Dorsolateral prefrontal cortex (tissue), 120 donors: ENCODE measurements at regions of chr12 and their contacts with region 1.

Region 1: DNA sequence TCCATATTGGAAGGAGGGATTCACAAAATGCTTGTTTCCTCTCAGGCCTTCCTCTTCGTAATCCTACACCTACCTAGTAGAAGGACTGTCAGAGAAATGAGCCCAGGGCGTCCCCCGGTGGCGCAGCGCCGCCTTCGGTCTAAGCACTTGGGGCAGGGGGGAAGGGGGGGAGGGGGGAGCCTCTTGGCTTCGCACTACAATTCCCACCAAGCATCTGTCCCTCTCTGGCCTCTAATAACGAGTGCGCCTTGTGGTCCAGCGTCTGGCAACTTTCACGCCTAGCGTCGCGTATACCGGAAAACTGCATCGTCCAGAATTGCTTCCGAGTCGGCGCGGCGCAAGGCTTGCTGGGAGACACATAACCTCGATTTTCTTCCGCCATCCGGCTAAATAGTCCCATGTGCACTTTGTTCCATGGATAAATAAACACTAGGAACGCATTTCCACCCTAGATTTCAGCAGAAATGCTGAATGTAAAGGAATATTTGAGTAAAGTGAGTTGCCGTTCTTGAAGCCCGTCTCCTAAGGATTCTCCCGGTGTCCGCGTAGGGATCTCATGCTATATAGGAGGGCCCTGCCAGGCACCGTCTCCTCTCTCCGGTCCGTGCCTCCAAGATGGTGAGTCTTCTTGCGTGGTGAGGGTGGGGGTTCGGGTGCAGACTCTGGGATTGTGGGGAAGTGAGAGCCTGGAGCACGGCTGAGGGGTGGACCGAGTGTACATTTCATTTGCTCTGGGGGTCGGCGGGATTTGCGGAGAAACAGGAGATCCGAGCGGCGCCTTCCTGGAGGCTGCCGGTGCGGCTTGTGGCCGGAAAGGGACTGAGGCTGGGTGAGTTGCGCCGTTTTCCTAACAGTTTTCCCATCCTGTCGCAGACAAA is at the start of gene RPS26:
- DNase-seq: peak; percentile 81 to 96 (median 92)
- H3K4me3 ChIP-seq: peak within 1 kb of the TSS; percentile 56 to 99 (median 87)
- H3K27ac ChIP-seq: peak within 1 kb of the TSS; percentile 68 to 100 (median 97)
- H3K27me3 ChIP-seq: no peaks in the 10 kb centered on the region
- CTCF ChIP-seq: peak in 55 of 56 donors; percentile 32 to 74 (median 57)
- total RNA-seq, gene RPS26: 6.6 to 65.3 (median 18.5) TPM

Region 2: DNA sequence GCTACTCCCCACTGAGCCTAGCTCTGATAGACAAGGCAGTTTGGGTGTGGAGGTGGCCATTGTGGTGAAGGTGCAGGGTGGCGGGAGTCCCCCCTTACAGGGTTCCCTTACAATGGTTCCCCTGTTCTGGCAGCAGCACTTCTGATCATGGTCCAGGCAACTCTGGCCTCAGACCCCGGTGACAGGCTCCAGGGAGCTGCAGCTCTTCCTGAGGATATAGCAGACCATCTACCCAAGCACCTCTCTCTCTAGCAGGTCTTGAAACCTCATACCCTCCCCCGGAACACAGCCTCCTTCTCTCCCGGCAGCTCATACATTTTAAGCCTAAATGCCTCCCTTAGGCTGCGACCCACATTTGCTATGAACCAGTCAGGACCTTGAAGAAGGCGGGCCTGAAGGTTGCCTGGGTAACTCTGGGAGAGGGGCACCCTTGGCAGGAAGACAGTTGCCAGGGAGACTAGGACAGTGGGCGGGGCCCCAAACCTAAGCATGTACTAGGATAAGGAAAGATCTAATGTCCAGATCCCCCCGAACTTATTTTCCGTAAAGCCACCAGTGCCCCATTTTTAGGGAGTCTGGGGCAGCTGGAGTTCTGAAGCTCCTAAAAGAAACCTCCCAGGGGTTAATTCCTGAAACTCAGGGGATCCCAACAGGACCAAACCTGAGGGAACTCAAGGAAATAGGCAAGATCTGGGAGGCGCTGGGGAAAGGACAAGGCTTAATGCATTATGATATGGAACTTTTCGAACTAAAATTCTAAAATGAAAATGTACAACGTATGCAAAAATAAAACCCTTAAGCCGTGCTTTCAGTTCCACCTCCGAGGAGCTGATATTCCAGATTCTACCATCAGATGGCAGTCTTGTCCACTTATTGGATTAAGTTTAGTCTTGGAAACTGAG is 303.4 kb before region 1 on chr12:
- intact Hi-C with region 1: loop called in 1 of 2 experiments (anchors 2 kb)
- DNase-seq: peak; percentile 48 to 88 (median 80)
- H3K4me3 ChIP-seq: peak overlapping the region; percentile 32 to 78 (median 63)
- H3K27ac ChIP-seq: peak overlapping the region; percentile 25 to 96 (median 87)
- H3K27me3 ChIP-seq: no peaks in the 10 kb centered on the region
- CTCF ChIP-seq: peak; percentile 79 to 98 (median 94)

Region 3: GRCh38 chr12:55996715-55997534 is 44.9 kb before region 1 on chr12 and contains the start of gene SUOX:
- intact Hi-C with region 1: loop called (anchors 2 to 5 kb)
- DNase-seq: peak; percentile 90 to 99 (median 98)
- H3K4me3 ChIP-seq: peak within 1 kb of the TSS; percentile 57 to 96 (median 79)
- H3K27ac ChIP-seq: peak within 1 kb of the TSS; percentile 25 to 96 (median 89)
- H3K27me3 ChIP-seq: no peaks in the 10 kb centered on the region
- CTCF ChIP-seq: peak in 24 of 56 donors; percentile 15 to 52 (median 30)
- total RNA-seq, gene SUOX: 19.5 to 39.8 (median 28.4) TPM

Region 4: DNA sequence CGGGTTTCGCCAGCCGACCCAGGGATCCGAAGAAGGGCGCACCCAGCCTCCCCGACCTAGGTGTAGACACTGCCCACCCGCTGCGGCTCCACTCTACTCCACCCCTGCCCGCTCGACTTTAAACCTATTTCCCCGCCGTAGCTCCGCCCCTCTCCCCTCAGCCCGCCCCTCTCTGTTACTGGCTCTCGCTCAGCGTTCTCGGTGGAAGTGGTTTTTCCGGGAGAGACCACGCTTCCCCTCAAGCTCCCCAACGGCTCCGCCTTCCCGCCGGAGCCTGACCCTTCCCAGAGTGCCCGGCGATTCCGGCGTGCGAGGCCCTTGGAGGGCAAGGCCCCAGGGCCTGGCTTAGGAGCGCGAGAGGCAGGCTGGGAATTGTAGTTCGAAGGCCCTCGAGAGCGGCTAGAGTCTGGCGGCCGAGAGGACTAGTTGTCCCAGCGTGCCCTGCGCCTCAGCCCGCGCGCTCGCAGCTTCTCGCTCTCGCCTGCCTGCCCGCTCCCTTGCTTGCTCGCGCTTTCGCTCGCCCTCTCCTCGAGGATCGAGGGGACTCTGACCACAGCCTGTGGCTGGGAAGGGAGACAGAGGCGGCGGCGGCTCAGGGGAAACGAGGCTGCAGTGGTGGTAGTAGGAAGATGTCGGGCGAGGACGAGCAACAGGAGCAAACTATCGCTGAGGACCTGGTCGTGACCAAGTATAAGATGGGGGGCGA is 62.5 kb after region 1 on chr12 and contains the start of gene PA2G4:
- intact Hi-C with region 1: loop called in 1 of 2 experiments (anchors 2 kb)
- DNase-seq: peak; percentile 94 to 99 (median 97)
- H3K4me3 ChIP-seq: peak within 1 kb of the TSS; percentile 67 to 98 (median 91)
- H3K27ac ChIP-seq: peak within 1 kb of the TSS; percentile 39 to 96 (median 85)
- H3K27me3 ChIP-seq: no peaks in the 10 kb centered on the region
- CTCF ChIP-seq: peak in 39 of 56 donors; percentile 13 to 68 (median 34)
- total RNA-seq, gene PA2G4: 40.1 to 80.6 (median 58.7) TPM

Region 5: GRCh38 chr12:56189176-56189917 is 147.6 kb after region 1 on chr12 and contains the start of gene SMARCC2:
- intact Hi-C with region 1: loop called in 1 of 2 experiments (anchors 10 kb)
- DNase-seq: peak; percentile 56 to 88 (median 75)
- H3K4me3 ChIP-seq: peak within 1 kb of the TSS; percentile 68 to 93 (median 82)
- H3K27ac ChIP-seq: peak within 1 kb of the TSS; percentile 49 to 95 (median 88)
- H3K27me3 ChIP-seq: no peaks in the 10 kb centered on the region
- CTCF ChIP-seq: peak; percentile 35 to 83 (median 66)
- total RNA-seq, gene SMARCC2: 144 to 252 (median 196) TPM

Region 6: DNA sequence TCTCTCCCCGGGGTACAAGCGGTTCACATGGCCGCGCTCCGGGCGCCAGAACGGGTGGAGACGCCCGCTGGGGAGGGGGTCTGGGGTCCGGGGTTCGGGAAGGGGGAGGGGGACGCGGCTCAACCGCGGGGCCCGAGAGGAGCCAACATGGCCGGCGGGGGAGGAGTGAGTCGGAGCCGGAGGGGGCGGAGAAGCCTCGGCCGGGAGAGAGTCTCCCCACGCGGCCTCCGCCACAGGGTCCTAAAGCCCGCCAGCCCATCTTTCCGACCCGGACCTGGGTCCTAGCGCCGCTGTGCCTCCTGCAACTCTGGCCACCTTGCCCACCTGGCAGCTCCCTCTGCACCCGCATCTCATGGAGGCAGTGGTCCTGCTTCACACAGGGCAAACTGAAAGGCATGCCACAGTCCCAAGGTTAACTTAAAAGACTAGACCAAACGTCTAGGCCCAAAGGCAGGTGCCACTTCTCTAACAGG is 588.4 kb after region 1 on chr12 and contains the start of gene BAZ2A:
- intact Hi-C with region 1: loop called in 1 of 2 experiments (anchors 5 kb)
- DNase-seq: peak; percentile 89 to 98 (median 96)
- H3K4me3 ChIP-seq: peak within 1 kb of the TSS; percentile 57 to 100 (median 96)
- H3K27ac ChIP-seq: peak within 1 kb of the TSS; percentile 72 to 99 (median 94)
- H3K27me3 ChIP-seq: no peaks in the 10 kb centered on the region
- CTCF ChIP-seq: peak in 27 of 56 donors; percentile 4 to 45 (median 22)
- total RNA-seq, gene BAZ2A: 58.5 to 126 (median 86.8) TPM